Dendritic cell treated with granulocyte-macrophage colony-stimulating factor and Interleukin-4, amounts not matched to agents 40 ng/mL and 50 ng/mL, for 4 days (primary cell): ENCODE measurements at regions of chr2 and their contacts with region 1.

Region 1: DNA sequence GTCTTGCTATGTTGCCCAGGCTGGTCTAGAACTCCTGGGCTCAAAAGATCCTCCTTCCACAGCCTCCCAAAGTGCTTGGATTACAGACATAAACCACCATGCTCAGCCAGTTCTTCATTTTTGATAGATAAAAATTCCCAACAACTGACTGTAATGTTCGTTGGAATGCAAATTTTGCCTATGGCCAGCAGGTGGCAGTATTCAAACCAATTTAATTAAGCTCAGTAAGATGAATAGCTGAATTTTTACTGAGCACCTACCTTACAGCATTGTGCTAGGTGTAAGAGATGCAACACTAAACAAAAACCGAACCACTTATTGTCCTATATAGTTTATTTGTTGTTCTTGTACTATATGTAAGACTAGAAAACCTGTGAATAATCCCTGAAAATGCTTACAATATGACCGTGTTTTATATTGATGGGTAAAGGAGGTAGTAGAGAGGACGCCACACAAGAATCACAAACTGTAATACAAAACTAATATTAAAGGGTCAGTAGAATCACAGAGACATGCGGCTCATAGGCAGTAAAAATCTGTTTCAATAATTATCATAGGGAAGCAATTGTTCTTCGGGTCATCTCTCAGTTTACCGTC is 8.2 kb upstream of the TMEM182 start:
- H3K4me3 Mint-ChIP-seq: no peak overlapping the region
- H3K27ac Mint-ChIP-seq: no peak overlapping the region
- H3K4me1 Mint-ChIP-seq: peaks cover 5% of the 10 kb centered on the region
- H3K27me3 Mint-ChIP-seq: no peaks in the 10 kb centered on the region

Region 2: GRCh38 chr2:102806250-102806837 is 52.7 kb after region 1 on chr2:
- intact Hi-C with region 1: loop called (anchors 1 kb)
- H3K4me3 Mint-ChIP-seq: no peak overlapping the region
- H3K27ac Mint-ChIP-seq: no peak overlapping the region
- H3K4me1 Mint-ChIP-seq: peaks cover 6% of the 10 kb centered on the region
- H3K27me3 Mint-ChIP-seq: no peaks in the 10 kb centered on the region